ENCODE measurements at regions of chr9 and their contacts with region 1.

Region 1: GRCh38 chr9:34242830-34243229 is 64.0 kb downstream of the UBAP1 start:
- DNase-seq: no peak
- ATAC-seq: peak in 2 of 4 donors; percentile 14 to 30
- H3K4me3 ChIP-seq: no peak overlapping the region
- H3K27ac ChIP-seq: peak overlapping the region; percentile 77
- H3K4me1 ChIP-seq: peaks cover 31% of the 10 kb centered on the region
- H3K27me3 ChIP-seq: no peaks in the 10 kb centered on the region
- CTCF ChIP-seq: no peak

Region 2: GRCh38 chr9:34185778-34186551 is 56.9 kb before region 1 on chr9:
- intact Hi-C with region 1: loop called in 1 of 2 experiments (anchors 5 kb)
- DNase-seq: no peak
- ATAC-seq: peak; percentile 89 to 94 (median 93)
- H3K4me3 ChIP-seq: peak overlapping the region; percentile 16
- H3K27ac ChIP-seq: peak overlapping the region; percentile 86
- H3K4me1 ChIP-seq: peaks cover 38% of the 10 kb centered on the region
- H3K27me3 ChIP-seq: no peaks in the 10 kb centered on the region
- CTCF ChIP-seq: no peak

Region 3: GRCh38 chr9:34197756-34198711 is 44.8 kb before region 1 on chr9:
- intact Hi-C with region 1: loop called in 1 of 2 experiments (anchors 5 kb)
- DNase-seq: no peak
- ATAC-seq: peak; percentile 32 to 59 (median 43)
- H3K4me3 ChIP-seq: no peak overlapping the region
- H3K27ac ChIP-seq: no peak overlapping the region
- H3K4me1 ChIP-seq: peaks cover 9% of the 10 kb centered on the region
- H3K27me3 ChIP-seq: no peaks in the 10 kb centered on the region
- CTCF ChIP-seq: no peak